Activated CD4-positive, alpha-beta memory T cell treated with anti-CD3 and anti-CD28 coated beads for 36 hours (primary cell): ENCODE measurements at regions of chr22 and their contacts with region 1.

Region 1: GRCh38 chr22:26642465-26643417 is 14.6 kb upstream of the MIAT start:
- DNase-seq: peak; percentile 94
- H3K4me3 Mint-ChIP-seq: peak overlapping the region; percentile 67
- H3K27ac Mint-ChIP-seq: peak overlapping the region; percentile 97
- H3K4me1 Mint-ChIP-seq: peaks cover 77% of the 10 kb centered on the region
- H3K27me3 Mint-ChIP-seq: no peaks in the 10 kb centered on the region

Region 2: DNA sequence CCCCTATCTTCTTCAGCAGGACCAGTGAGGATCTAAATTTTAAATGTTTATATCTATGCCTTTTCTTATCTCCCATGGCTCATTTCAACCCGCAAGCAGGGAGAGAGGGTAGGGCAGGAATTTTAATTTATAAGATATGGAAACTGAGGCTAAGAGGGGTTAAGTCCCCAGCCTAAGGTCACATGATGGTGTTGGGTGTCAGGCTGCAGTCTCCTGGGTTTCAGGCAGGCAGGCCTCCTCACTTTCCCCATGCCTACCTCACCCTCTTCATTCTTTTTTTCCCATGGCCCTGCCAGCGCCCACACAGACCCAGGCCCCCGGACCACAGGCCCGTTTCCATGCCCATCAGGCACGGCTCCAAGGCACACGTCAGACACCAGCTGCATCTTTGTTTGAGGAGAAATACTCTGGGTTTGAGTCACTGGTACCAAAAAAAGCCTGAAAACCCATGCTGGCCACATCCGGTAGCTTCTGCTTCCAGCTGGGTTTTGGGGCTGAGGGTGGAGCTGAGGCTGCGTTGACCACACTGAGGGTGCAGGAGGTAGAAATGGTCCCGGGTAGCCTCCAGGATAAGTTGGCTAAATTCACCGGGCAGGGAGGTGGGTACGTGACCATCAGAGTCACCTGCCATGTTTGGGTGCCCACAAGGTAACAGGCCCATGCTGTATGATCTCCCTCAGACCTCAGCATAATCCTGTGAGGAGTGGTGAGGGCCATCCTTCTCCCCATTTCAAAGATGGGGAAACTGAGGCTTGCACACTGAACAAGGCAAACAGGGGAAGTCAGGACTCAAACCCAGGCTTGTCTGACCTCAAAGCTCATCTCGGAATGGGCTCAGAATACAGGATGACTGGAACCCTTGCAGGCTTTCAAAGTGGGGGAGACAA is 32.4 kb before region 1 on chr22:
- CTCF ChIA-PET with region 1: no interaction called
- POLR2A ChIA-PET with region 1: interaction called, 4 read pairs
- intact Hi-C with region 1: loop called (anchors 2 kb)
- DNase-seq: peak; percentile 80
- H3K4me3 Mint-ChIP-seq: no peak overlapping the region
- H3K27ac Mint-ChIP-seq: peak overlapping the region; percentile 50
- H3K4me1 Mint-ChIP-seq: peaks cover 21% of the 10 kb centered on the region
- H3K27me3 Mint-ChIP-seq: no peaks in the 10 kb centered on the region